HCT116 (cell line): ENCODE measurements at regions of chr12 and their contacts with region 1.

Region 1: DNA sequence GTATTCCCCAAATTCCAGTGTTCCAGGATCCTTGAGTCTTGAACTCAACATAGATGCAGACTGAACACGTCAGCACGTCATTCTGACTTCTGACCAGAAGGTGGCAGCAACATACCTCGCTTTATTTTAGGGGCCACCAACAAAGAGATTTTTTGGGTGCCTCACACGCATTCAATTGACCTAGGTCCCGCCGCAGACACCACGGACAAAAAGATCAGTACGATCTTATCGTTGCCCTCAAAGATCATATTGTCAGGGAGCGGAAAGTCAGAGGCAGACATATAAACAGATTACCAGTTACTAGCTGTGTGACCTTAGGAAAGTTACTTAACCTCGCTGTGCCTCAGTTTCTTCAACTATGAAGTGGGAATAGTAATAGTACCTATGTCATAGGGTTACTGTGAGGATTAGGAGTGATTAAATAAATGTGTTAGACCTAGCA is 6.5 kb upstream of the PRPH start:
- DNase-seq: peak; percentile 46
- ATAC-seq: peak; percentile 74
- H3K4me3 ChIP-seq: no peak overlapping the region
- H3K27ac ChIP-seq: no peak overlapping the region
- H3K4me1 ChIP-seq: peaks cover 0 to 10% of the 10 kb centered on the region in 2 experiments; a peak in 2 of 4 replicates
- H3K27me3 ChIP-seq: no peaks in the 10 kb centered on the region
- CTCF ChIP-seq: peak; percentile 76 to 97 (median 89)
- POLR2A ChIP-seq: no peak
- RAD21 ChIP-seq: peak; percentile 92

Region 2: GRCh38 chr12:49331380-49332222 is 43.2 kb after region 1 on chr12:
- CTCF ChIA-PET with region 1: interaction called, 10 read pairs
- POLR2A ChIA-PET with region 1: no interaction called
- RAD21 ChIA-PET with region 1: no interaction called
- intact Hi-C with region 1: no loop called
- DNase-seq: peak; percentile 43
- ATAC-seq: peak; percentile 84
- H3K4me3 ChIP-seq: no peak overlapping the region
- H3K27ac ChIP-seq: peak overlapping the region; percentile 35
- H3K4me1 ChIP-seq: peaks cover 4 to 11% of the 10 kb centered on the region in 2 experiments; a peak in 2 of 4 replicates
- H3K27me3 ChIP-seq: no peaks in the 10 kb centered on the region
- CTCF ChIP-seq: peak; percentile 79 to 87 (median 86)
- POLR2A ChIP-seq: no peak
- RAD21 ChIP-seq: peak; percentile 86

Region 3: DNA sequence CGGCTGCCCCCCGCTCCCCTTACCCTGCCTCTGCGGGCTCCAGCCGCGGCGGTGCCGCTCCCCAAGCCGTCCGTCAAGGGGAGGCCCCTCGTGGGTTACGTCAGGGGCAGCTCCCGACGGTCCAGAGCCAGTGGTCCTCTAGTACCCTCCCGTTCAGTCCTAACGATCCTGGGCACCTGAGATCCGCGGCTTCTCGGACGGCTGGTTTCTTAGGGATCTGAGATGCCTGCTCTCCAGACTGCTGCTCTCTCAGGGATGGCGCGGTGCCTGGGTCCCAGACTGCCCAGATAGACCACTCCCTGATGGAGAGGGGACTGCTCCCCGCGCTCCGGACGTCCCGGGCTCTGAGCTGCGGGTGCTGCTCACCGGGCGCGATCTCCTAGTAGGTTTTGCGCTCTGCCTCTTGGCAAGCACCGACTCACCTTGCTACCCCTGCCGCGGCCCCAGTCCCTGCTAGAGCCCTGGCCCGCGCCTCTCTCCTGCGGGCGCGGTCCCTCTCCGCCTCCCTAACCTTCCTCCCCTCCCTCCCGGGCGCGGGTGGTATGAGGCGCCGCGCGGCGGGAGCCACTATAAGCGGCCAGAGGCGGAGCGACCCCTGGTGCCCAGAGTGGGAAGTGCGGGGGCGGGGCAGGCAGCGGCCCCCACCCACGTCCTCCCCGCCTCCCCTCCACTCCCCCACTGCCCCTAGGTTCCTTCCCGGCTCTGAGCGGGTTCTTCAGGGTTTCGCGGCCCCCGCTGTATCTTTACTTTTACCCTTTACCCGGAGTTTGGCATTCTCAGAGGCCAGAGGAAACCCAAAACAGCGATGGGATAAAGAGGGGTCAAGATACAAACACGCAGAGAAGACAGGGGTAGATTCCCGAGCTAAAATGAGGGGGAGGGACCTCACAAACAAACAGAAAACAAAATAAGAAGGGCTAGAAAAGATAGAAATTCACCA is 48.5 kb after region 1 on chr12 and contains the start of gene C1QL4:
- CTCF ChIA-PET with region 1: interaction called, 24 read pairs
- POLR2A ChIA-PET with region 1: no interaction called
- RAD21 ChIA-PET with region 1: no interaction called
- intact Hi-C with region 1: loop called (anchors 1 kb)
- DNase-seq: peak; percentile 33
- ATAC-seq: peak; percentile 88
- H3K4me3 ChIP-seq: peak within 1 kb of the TSS; percentile 51 to 64
- H3K27ac ChIP-seq: peak within 1 kb of the TSS; percentile 34; the same call in 1 of the 2 replicates
- H3K4me1 ChIP-seq: peaks cover 13 to 38% of the 10 kb centered on the region in 2 experiments
- H3K27me3 ChIP-seq: no peaks in the 10 kb centered on the region
- CTCF ChIP-seq: peak; percentile 67 to 90 (median 90); a peak in 5 of 6 replicates
- POLR2A ChIP-seq: peak; percentile 35
- RAD21 ChIP-seq: peak; percentile 49; the same call in 1 of the 2 replicates
- total RNA-seq, gene C1QL4: 8.1 TPM

Region 4: GRCh38 chr12:49422114-49422513 is 133.7 kb after region 1 on chr12:
- CTCF ChIA-PET with region 1: no interaction called
- POLR2A ChIA-PET with region 1: no interaction called
- RAD21 ChIA-PET with region 1: no interaction called
- intact Hi-C with region 1: no loop called
- DNase-seq: no peak
- ATAC-seq: no peak
- H3K4me3 ChIP-seq: no peak overlapping the region
- H3K27ac ChIP-seq: no peak overlapping the region
- H3K4me1 ChIP-seq: no peaks in the 10 kb centered on the region; a peak in 1 of 4 replicates
- H3K27me3 ChIP-seq: no peaks in the 10 kb centered on the region
- CTCF ChIP-seq: no peak
- POLR2A ChIP-seq: no peak
- RAD21 ChIP-seq: no peak